Endothelial cell of umbilical vein (primary cell): ENCODE measurements at regions of chr15 and their contacts with region 1.

Region 1: DNA sequence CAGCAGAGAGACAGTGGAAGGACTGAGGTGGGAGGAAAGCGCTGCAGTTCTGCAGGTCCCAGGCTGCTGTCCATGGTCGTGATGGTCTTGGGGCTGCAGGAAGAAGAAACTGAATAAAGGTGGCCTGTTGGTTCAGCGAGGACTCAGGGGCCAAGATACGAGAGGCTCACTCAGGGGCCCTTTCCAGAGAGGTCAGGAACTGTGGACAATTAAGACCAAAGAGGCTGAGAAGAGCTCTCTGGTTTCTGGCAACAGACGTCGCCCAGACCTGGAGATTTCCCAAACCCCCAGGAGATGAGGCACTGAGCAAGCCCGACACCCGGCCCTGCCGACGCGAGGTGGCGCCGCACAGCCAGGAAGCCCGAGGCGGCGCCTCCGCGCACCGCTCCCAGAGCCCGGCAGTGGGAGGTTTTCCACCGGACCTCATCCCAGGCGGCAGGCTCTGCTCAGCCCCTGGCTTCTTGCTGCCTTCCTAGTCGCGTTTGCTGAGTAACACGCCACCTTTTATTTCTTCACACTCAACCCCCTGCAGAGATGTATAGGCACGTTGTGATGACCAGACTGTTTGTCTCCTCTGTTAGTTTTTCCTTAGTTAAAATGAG is 56.4 kb upstream of the ARRDC4 start:
- DNase-seq: peak; percentile 39
- H3K4me3 ChIP-seq: no peak overlapping the region
- H3K27ac ChIP-seq: no peak overlapping the region
- H3K4me1 ChIP-seq: no peaks in the 10 kb centered on the region
- H3K27me3 ChIP-seq: peaks cover 0 to 4% of the 10 kb centered on the region in 2 experiments
- CTCF ChIP-seq: peak; percentile 55 to 80
- POLR2A ChIP-seq: no peak

Region 2: DNA sequence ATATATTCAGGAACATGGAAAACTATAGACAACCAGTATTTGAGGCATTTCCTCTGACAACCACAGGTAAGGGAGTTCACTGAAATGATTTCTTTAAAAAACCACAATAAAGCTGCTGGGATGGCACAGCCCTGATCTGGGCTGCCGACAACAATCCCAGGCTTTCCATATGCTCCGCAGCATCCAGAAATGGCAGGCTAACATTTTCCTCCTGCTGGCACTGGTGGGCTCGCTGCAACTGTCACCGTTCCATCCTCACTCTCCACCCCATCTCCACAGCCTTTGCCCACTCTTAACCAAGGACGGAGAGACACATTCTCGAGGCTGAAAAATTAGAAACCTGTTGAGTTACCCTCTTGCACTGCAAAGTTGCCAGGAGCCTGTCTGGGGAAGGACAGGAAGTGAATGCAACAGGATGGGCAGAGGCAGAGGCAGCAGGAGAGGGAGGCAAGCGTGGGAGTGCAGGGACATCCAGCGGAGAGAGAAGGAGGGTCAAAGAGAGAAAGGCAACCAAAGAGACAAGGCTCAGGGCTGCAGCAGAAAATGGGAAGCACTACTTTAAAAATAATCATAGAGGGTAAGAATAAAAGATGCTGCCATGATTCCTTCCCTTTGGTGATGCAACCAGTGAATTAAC is 22.6 kb before region 1 on chr15:
- CTCF ChIA-PET with region 1: no interaction called
- POLR2A ChIA-PET with region 1: no interaction called
- dilution Hi-C with region 1: no loop called
- intact Hi-C with region 1: no loop called
- DNase-seq: no peak
- H3K4me3 ChIP-seq: no peak overlapping the region
- H3K27ac ChIP-seq: no peak overlapping the region
- H3K4me1 ChIP-seq: no peaks in the 10 kb centered on the region
- H3K27me3 ChIP-seq: no peaks in the 10 kb centered on the region
- CTCF ChIP-seq: no peak
- POLR2A ChIP-seq: no peak

Region 3: GRCh38 chr15:98177924-98178592 is 274.0 kb after region 1 on chr15:
- CTCF ChIA-PET with region 1: interaction called, 13 read pairs
- POLR2A ChIA-PET with region 1: no interaction called
- dilution Hi-C with region 1: no loop called
- intact Hi-C with region 1: loop called (anchors 1 kb)
- DNase-seq: peak; percentile 53
- H3K4me3 ChIP-seq: no peak overlapping the region
- H3K27ac ChIP-seq: no peak overlapping the region
- H3K4me1 ChIP-seq: no peaks in the 10 kb centered on the region
- H3K27me3 ChIP-seq: no peaks in the 10 kb centered on the region
- CTCF ChIP-seq: peak; percentile 32 to 39
- POLR2A ChIP-seq: no peak

Region 4: DNA sequence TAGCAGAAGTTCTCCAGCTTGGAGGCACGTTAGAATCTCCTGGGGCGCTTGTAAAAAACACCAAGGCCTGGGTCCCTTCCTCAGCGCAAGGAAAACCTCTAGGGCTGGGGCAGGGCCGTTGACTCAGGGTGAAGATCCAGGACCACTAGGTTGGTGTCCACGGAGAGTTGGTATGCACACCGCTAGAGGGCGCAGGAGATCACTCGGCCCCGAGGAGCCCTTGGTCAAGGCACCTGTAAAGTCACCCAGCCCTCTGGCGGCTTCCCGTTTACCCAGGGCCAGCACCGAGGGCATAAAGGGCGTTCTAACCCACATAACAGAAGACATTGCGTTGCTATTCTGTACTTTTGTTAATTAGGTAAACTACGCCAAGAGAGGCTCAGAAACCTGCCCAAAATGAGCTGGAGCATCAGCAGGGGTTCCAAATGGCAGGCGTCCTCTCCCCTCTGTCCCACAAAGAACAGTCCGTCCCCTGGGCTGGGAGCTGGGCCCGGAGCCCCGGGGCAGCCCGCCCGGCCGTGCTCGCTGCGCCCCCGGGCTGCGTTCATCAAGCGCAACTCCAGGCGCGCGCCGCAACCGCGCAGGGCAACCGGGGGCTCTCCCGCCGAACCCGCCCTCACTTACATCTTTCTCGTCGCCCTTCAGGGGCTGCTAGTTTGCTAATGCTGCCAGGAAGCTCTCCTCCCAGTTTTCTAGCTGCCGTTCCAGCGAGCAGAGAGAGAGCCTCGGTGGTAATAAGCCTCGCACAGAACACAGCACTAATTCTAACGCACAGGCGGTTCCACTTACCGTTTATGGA is 388.6 kb after region 1 on chr15:
- CTCF ChIA-PET with region 1: interaction called, 4 read pairs
- POLR2A ChIA-PET with region 1: no interaction called
- dilution Hi-C with region 1: no loop called
- intact Hi-C with region 1: loop called (anchors 1 kb)
- DNase-seq: peak; percentile 6
- H3K4me3 ChIP-seq: no peak overlapping the region
- H3K27ac ChIP-seq: no peak overlapping the region
- H3K4me1 ChIP-seq: no peaks in the 10 kb centered on the region
- H3K27me3 ChIP-seq: no peaks in the 10 kb centered on the region
- CTCF ChIP-seq: peak; percentile 62 to 77
- POLR2A ChIP-seq: no peak